Activated CD4-positive, alpha-beta T cell treated with anti-CD3 and anti-CD28 coated beads, Interleukin-2, amount 10 ng/mL, durations not matched to agents 24 days and 14 days (primary cell): ENCODE measurements at regions of chr7 and their contacts with region 1.

Region 1: GRCh38 chr7:101688183-101688831 is 59.2 kb upstream of the MYL10 start:
- DNase-seq: peak; percentile 95
- H3K4me3 Mint-ChIP-seq: no peak overlapping the region
- H3K27ac Mint-ChIP-seq: no peak overlapping the region
- H3K4me1 Mint-ChIP-seq: peaks cover 5% of the 10 kb centered on the region
- H3K27me3 Mint-ChIP-seq: peaks cover 2% of the 10 kb centered on the region

Region 2: GRCh38 chr7:101743241-101743994 is 55.1 kb after region 1 on chr7:
- intact Hi-C with region 1: loop called (anchors 2 kb)
- DNase-seq: peak; percentile 92
- H3K4me3 Mint-ChIP-seq: peak overlapping the region; percentile 83
- H3K27ac Mint-ChIP-seq: no peak overlapping the region
- H3K4me1 Mint-ChIP-seq: peaks cover 40% of the 10 kb centered on the region
- H3K27me3 Mint-ChIP-seq: no peaks in the 10 kb centered on the region

Region 3: GRCh38 chr7:101856473-101857357 is 168.4 kb after region 1 on chr7:
- intact Hi-C with region 1: loop called (anchors 1 kb)
- DNase-seq: peak; percentile 93
- H3K4me3 Mint-ChIP-seq: peak overlapping the region; percentile 90
- H3K27ac Mint-ChIP-seq: peak overlapping the region; percentile 97
- H3K4me1 Mint-ChIP-seq: peaks cover 28% of the 10 kb centered on the region
- H3K27me3 Mint-ChIP-seq: no peaks in the 10 kb centered on the region

Region 4: DNA sequence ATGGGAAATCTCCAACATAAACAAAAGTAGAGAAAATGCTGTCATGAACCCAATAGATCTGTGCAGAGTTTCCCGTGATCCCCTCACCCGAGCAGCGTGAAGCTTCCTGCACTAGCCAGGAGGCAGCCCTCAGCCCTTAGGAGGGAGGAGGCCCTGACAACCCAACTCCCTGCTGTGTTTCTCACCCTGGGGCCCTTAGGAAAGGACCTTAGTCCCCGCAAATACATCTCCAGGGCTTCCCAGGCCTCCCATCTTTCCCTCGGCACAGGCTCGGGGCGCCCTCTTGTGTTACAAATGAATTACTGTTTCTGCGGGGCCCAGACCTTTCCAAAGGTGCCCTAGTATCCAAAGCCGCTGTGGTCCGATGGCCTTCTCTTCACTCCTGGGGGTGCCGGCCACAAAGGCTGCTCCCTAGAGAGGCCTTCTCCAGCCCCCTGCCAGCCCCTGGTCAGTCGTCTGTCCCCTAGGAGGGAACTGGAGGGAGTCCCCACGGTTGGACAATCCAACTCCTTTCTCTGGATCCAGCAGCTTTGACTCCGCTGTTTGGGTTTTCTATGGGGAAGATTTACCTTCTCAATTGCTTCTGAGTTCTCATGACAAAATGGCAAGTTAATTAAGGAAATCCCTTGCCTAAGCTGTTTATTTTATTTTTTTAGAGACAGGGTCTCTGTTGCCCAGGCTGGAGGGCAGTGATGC is 548.4 kb after region 1 on chr7:
- intact Hi-C with region 1: loop called (anchors 1 kb)
- DNase-seq: peak; percentile 85
- H3K4me3 Mint-ChIP-seq: no peak overlapping the region
- H3K27ac Mint-ChIP-seq: no peak overlapping the region
- H3K4me1 Mint-ChIP-seq: no peaks in the 10 kb centered on the region
- H3K27me3 Mint-ChIP-seq: no peaks in the 10 kb centered on the region

Region 5: GRCh38 chr7:102272075-102272917 is 584.0 kb after region 1 on chr7:
- intact Hi-C with region 1: loop called (anchors 5 kb)
- DNase-seq: peak; percentile 92
- H3K4me3 Mint-ChIP-seq: no peak overlapping the region
- H3K27ac Mint-ChIP-seq: no peak overlapping the region
- H3K4me1 Mint-ChIP-seq: peaks cover 2% of the 10 kb centered on the region
- H3K27me3 Mint-ChIP-seq: no peaks in the 10 kb centered on the region